ENCODE measurements at regions of chr7 and their contacts with region 1.

Region 1: GRCh38 chr7:50206453-50207250 is 97.9 kb upstream of the IKZF1 start:
- DNase-seq: peak; percentile 92
- ATAC-seq: peak; percentile 68
- H3K4me3 Mint-ChIP-seq: peak overlapping the region; percentile 60
- H3K27ac Mint-ChIP-seq: peak overlapping the region; percentile 97
- H3K4me1 Mint-ChIP-seq: peaks cover 94% of the 10 kb centered on the region
- H3K27me3 Mint-ChIP-seq: no peaks in the 10 kb centered on the region
- CTCF ChIP-seq: no peak

Region 2: GRCh38 chr7:50147951-50148808 is 58.5 kb before region 1 on chr7:
- CTCF ChIA-PET with region 1: interaction called, 15 read pairs
- POLR2A ChIA-PET with region 1: interaction called, 7 read pairs
- intact Hi-C with region 1: loop called (anchors 2 kb)
- DNase-seq: peak; percentile 77
- ATAC-seq: peak; percentile 82
- H3K4me3 Mint-ChIP-seq: peak overlapping the region; percentile 59
- H3K27ac Mint-ChIP-seq: peak overlapping the region; percentile 97
- H3K4me1 Mint-ChIP-seq: peaks cover 89% of the 10 kb centered on the region
- H3K27me3 Mint-ChIP-seq: no peaks in the 10 kb centered on the region
- CTCF ChIP-seq: no peak

Region 3: GRCh38 chr7:50266635-50267386 is 60.2 kb after region 1 on chr7:
- CTCF ChIA-PET with region 1: interaction called, 77 read pairs
- POLR2A ChIA-PET with region 1: interaction called, 34 read pairs
- intact Hi-C with region 1: loop called (anchors 2 kb)
- DNase-seq: peak; percentile 92
- ATAC-seq: peak; percentile 62
- H3K4me3 Mint-ChIP-seq: peak overlapping the region; percentile 63
- H3K27ac Mint-ChIP-seq: peak overlapping the region; percentile 92
- H3K4me1 Mint-ChIP-seq: peaks cover 93% of the 10 kb centered on the region
- H3K27me3 Mint-ChIP-seq: no peaks in the 10 kb centered on the region
- CTCF ChIP-seq: no peak

Region 4: DNA sequence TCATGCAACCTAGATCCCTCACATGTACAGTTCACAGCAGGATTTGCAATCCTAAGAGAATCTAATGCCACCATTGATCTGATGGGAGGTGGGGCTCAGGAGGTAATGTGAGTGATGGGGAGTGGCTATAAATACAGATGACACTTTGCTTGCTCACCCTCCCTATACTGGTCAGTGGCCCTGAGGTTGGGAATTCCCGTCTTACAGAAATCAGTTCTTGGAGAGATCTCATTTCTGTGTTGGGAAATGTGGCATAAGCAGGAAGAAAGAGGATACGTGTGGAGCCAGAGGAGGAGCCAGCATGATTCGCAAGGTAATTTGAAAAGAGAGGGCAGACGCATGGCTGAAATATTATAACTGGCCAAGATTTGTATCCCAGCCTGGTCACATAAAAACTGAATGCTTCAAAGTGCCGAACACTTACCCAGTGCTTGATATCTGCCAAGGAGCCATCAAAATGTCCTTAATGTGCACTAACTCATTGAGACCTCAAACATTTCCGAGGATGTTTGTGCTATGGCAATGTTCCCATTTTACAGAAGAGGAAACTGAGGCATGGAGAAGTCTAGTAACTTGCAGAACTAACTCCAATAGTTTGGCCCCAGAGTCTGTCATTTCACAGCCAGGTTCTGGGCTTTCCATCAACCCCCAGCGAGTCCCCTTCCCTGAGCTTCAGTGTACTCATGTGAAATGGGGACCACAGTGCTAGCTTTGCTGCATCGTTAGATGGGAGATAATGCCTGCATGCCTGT is 92.3 kb after region 1 on chr7:
- CTCF ChIA-PET with region 1: interaction called, 209 read pairs
- POLR2A ChIA-PET with region 1: interaction called, 376 read pairs
- intact Hi-C with region 1: no loop called
- DNase-seq: no peak
- ATAC-seq: no peak
- H3K4me3 Mint-ChIP-seq: no peak overlapping the region
- H3K27ac Mint-ChIP-seq: no peak overlapping the region
- H3K4me1 Mint-ChIP-seq: peaks cover 56% of the 10 kb centered on the region
- H3K27me3 Mint-ChIP-seq: no peaks in the 10 kb centered on the region
- CTCF ChIP-seq: no peak

Region 5: GRCh38 chr7:50327443-50327842 is 120.8 kb after region 1 on chr7:
- CTCF ChIA-PET with region 1: interaction called, 10 read pairs
- POLR2A ChIA-PET with region 1: interaction called, 5 read pairs
- intact Hi-C with region 1: no loop called
- DNase-seq: no peak
- ATAC-seq: no peak
- H3K4me3 Mint-ChIP-seq: no peak overlapping the region
- H3K27ac Mint-ChIP-seq: peak overlapping the region; percentile 64
- H3K4me1 Mint-ChIP-seq: peaks cover 94% of the 10 kb centered on the region
- H3K27me3 Mint-ChIP-seq: no peaks in the 10 kb centered on the region
- CTCF ChIP-seq: no peak

Region 6: GRCh38 chr7:50349963-50350944 is 143.6 kb after region 1 on chr7:
- CTCF ChIA-PET with region 1: interaction called, 31 read pairs
- POLR2A ChIA-PET with region 1: interaction called, 39 read pairs
- intact Hi-C with region 1: loop called (anchors 5 kb)
- DNase-seq: peak; percentile 94
- ATAC-seq: peak; percentile 71
- H3K4me3 Mint-ChIP-seq: peak overlapping the region; percentile 42
- H3K27ac Mint-ChIP-seq: peak overlapping the region; percentile 95
- H3K4me1 Mint-ChIP-seq: peaks cover 96% of the 10 kb centered on the region
- H3K27me3 Mint-ChIP-seq: no peaks in the 10 kb centered on the region
- CTCF ChIP-seq: no peak

Region 7: DNA sequence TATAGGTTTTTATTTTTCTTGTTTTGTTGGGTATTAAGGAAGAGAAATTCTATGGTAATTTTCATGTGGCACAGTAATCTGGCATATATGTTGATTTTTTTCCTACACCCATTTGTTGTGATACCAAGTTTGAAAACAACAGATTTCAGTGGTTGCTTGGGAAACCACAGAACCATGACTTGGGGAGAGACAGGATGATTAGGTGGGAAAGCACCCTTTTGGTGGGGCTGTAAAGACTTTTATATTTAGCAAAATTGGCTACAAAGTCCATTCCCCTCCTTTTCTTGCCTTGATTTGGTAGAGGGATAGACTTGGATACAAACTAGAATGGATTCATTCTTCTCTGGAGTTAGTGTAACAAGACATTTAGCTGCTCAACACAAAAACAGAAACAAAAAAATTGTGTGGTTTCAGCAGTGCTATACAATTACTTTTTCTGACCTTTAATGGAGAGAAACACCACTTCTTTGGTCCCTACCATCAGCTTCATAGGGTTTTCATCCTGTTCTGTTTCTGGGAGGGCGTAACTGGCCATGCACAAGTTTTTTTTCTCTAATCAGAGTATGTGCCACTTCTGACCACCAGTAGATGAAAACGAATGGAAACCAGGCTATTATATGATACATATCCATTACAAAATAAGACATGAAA is 190.8 kb after region 1 on chr7:
- CTCF ChIA-PET with region 1: interaction called, 10 read pairs
- POLR2A ChIA-PET with region 1: interaction called, 13 read pairs
- intact Hi-C with region 1: no loop called
- DNase-seq: peak; percentile 69
- ATAC-seq: peak; percentile 16
- H3K4me3 Mint-ChIP-seq: no peak overlapping the region
- H3K27ac Mint-ChIP-seq: peak overlapping the region; percentile 88
- H3K4me1 Mint-ChIP-seq: peaks cover 81% of the 10 kb centered on the region
- H3K27me3 Mint-ChIP-seq: no peaks in the 10 kb centered on the region
- CTCF ChIP-seq: no peak

Region 8: DNA sequence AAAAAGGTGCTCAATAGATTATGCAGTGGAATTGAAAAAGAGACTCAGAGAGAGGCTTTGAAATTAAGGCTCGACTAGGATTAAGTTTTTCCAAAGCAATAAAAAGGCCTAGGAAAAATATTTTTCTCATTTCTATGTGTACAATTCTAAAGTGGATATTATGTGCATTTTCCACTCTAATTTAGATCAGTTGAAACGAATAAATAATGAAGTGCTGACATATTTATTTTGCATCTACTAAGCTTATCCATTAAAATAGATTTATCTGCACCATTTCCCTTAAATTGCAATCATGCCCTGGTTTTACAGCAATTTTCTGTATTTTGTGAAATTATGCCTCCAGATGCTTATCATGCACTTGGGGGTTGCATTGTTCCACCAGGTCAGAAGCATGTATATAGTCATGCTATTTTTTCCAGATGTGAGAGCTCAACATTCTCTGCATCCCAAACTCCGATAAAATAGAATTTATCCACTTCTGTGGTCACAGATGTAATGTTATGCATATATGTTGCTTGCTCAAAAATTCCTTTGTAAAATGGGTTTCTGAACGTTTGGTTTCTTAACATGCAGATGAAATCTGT is 225.2 kb after region 1 on chr7:
- CTCF ChIA-PET with region 1: no interaction called
- POLR2A ChIA-PET with region 1: no interaction called
- intact Hi-C with region 1: no loop called
- DNase-seq: no peak
- ATAC-seq: no peak
- H3K4me3 Mint-ChIP-seq: no peak overlapping the region
- H3K27ac Mint-ChIP-seq: no peak overlapping the region
- H3K4me1 Mint-ChIP-seq: no peaks in the 10 kb centered on the region
- H3K27me3 Mint-ChIP-seq: no peaks in the 10 kb centered on the region
- CTCF ChIP-seq: no peak

Measured in activated CD8-positive, alpha-beta T cell treated with anti-CD3 and anti-CD28 coated beads for 36 hours (primary cell).